ENCODE measurements at regions of chr14 and their contacts with region 1.

Region 1: GRCh38 chr14:64434528-64434927 is 30.8 kb upstream of the AKAP5 start:
- H3K4me3 ChIP-seq: no peak overlapping the region
- H3K27ac ChIP-seq: no peak overlapping the region
- H3K4me1 ChIP-seq: no peaks in the 10 kb centered on the region
- CTCF ChIP-seq: no peak

Region 2: GRCh38 chr14:63996625-63997220 is 437.8 kb before region 1 on chr14:
- CTCF ChIA-PET with region 1: no interaction called
- POLR2A ChIA-PET with region 1: no interaction called
- H3K4me3 ChIP-seq: no peak overlapping the region
- H3K27ac ChIP-seq: no peak overlapping the region
- H3K4me1 ChIP-seq: no peaks in the 10 kb centered on the region
- CTCF ChIP-seq: no peak

Region 3: GRCh38 chr14:64338616-64339316 is 95.8 kb before region 1 on chr14:
- CTCF ChIA-PET with region 1: interaction called, 16 read pairs
- POLR2A ChIA-PET with region 1: no interaction called
- H3K4me3 ChIP-seq: peak overlapping the region; percentile 77
- H3K27ac ChIP-seq: peak overlapping the region; percentile 94
- H3K4me1 ChIP-seq: no peaks in the 10 kb centered on the region
- CTCF ChIP-seq: no peak

Region 4: GRCh38 chr14:64400829-64401459 is 33.6 kb before region 1 on chr14:
- CTCF ChIA-PET with region 1: interaction called, 12 read pairs
- POLR2A ChIA-PET with region 1: interaction called, 3 read pairs
- H3K4me3 ChIP-seq: no peak overlapping the region
- H3K27ac ChIP-seq: no peak overlapping the region; the same call in 1 of the 2 replicates
- H3K4me1 ChIP-seq: no peaks in the 10 kb centered on the region
- CTCF ChIP-seq: no peak

Region 5: DNA sequence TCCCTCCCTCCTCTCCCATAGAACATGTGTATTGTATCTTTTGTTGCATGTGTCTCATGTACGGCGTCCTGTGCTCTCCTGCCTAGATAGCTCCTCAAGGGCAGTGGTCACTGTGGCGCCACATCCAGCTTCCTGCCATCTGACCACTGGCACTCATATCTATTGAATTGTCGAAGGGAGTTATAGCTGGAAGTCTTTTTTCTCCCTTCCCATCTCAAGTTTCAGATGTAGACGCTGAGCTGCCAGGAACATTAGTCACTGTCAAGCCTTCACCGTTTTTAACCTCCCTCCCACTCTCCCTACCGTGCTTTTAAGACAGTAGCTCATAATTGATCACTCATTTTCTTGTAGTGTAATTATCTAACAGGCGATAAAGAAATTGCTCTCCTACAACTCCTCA is 13.4 kb before region 1 on chr14:
- CTCF ChIA-PET with region 1: interaction called, 88 read pairs
- POLR2A ChIA-PET with region 1: no interaction called
- H3K4me3 ChIP-seq: no peak overlapping the region
- H3K27ac ChIP-seq: no peak overlapping the region
- H3K4me1 ChIP-seq: no peaks in the 10 kb centered on the region
- CTCF ChIP-seq: no peak

Region 6: DNA sequence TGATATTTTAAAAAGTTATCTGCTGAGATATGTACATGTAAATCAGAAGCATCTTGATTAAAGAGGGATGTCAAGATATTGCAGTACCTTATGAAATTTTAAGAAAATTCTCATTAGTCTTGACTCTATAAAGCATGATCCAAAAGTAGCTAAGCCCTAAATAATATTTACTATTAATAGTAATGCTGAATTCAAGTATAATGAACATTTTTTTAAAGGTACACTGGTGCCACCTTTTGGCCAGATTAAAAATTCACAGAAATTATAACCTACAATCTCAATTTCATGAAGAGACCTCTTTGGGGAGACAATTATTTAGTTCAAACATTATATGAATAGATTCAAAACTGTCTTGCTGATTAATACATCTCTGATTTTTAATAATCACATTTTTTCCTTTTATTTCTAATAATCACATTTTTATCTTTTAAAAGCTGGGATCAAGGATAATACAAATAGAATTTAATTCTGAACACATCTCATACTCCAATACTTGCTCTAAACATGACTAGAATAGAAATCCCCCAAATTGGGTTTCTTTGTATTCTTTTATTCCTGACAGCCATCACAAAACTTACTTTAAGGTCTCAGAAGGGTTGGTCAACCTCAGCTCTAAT is 44.2 kb after region 1 on chr14:
- CTCF ChIA-PET with region 1: interaction called, 28 read pairs
- POLR2A ChIA-PET with region 1: no interaction called
- H3K4me3 ChIP-seq: no peak overlapping the region
- H3K27ac ChIP-seq: no peak overlapping the region
- H3K4me1 ChIP-seq: peaks cover 6% of the 10 kb centered on the region; the same call in 1 of the 2 replicates
- CTCF ChIP-seq: no peak

Region 7: GRCh38 chr14:64720131-64720576 is 285.6 kb after region 1 on chr14:
- CTCF ChIA-PET with region 1: no interaction called
- POLR2A ChIA-PET with region 1: no interaction called
- H3K4me3 ChIP-seq: no peak overlapping the region
- H3K27ac ChIP-seq: peak overlapping the region; percentile 57
- H3K4me1 ChIP-seq: peaks cover 22% of the 10 kb centered on the region
- CTCF ChIP-seq: no peak